Activated T-helper 2 cell treated with anti-CD3 and anti-CD28 coated beads, Interferon-gamma antibody, Interleukin-2, Interleukin-4, amounts not matched to agents 10 μg/mL and 5 μg/mL and 100 μg/mL, durations not matched to agents 14 hours and 24 hours and 36 hours (primary cell): ENCODE measurements at regions of chr6 and their contacts with region 1.

Region 1: DNA sequence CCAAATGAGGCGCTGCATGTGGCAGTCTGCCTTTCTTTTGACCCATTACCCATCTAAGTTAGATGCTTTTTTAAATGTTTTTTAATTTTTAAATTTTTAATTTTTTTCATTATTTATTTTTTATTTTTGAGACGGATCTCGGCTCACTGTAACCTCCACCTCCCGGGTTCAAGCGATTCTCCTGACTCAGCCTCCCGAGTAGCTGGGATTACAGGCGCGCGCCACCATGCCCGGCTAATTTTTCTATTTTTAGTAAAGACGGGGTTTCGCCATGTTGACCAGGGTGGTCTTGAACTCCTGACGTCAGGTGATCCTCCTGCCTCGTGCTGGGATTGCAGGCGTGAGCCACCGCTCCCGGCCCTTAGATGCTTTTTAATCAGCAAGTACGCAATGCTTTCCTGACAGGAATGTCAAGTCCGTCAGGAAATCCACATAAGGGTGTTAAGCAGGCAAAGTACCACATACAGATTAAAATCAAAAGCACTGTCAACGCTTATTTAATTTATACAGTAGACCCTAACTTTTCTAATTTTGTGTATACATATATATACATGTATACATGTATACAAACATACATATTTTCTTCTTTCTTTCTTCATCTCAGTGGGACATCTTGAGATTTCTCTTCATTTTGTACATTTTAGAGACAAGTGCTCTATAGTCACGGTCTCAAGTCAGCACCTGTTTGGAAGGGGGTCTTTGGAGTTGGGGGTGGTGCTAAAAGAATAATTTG is 995 bp upstream of the GSTA4 start:
- DNase-seq: peak; percentile 23
- H3K4me3 Mint-ChIP-seq: peak overlapping the region; percentile 90
- H3K27ac Mint-ChIP-seq: peak overlapping the region; percentile 90
- H3K4me1 Mint-ChIP-seq: peaks cover 30% of the 10 kb centered on the region
- H3K27me3 Mint-ChIP-seq: peaks cover 8% of the 10 kb centered on the region

Region 2: GRCh38 chr6:52419809-52420670 is 576.0 kb before region 1 on chr6 and contains the start of gene EFHC1:
- intact Hi-C with region 1: loop called (anchors 2 kb)
- DNase-seq: peak; percentile 97
- H3K4me3 Mint-ChIP-seq: no peak within 1 kb of the TSS
- H3K27ac Mint-ChIP-seq: no peak within 1 kb of the TSS
- H3K4me1 Mint-ChIP-seq: peaks cover 20% of the 10 kb centered on the region
- H3K27me3 Mint-ChIP-seq: peaks cover 5% of the 10 kb centered on the region
- total RNA-seq, gene EFHC1: 0.67 and 1.6 TPM in 2 replicates

Region 3: GRCh38 chr6:52815167-52816092 is 180.6 kb before region 1 on chr6:
- intact Hi-C with region 1: no loop called
- DNase-seq: peak; percentile 24
- H3K4me3 Mint-ChIP-seq: no peak overlapping the region
- H3K27ac Mint-ChIP-seq: no peak overlapping the region
- H3K4me1 Mint-ChIP-seq: no peaks in the 10 kb centered on the region
- H3K27me3 Mint-ChIP-seq: peaks cover 15% of the 10 kb centered on the region

Region 4: DNA sequence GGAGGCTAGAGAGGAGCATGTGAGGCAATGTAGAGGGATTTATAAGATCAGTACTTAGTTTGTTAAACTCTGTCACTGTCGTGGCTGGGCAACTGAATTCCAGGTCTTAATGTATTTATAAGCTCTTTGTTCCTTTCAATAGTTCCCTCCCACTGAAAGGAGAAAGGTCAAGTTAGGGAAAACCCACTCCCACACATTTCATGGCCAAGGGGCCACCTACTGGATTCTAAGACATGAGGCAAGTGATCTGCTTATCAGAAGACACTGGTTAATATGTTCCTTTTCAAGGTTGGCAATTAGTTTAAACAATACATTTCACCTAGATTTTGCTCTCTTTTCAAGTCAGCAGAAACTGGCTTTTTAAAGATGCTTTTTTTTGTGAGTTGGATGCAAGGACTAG is 150.1 kb before region 1 on chr6:
- intact Hi-C with region 1: no loop called
- DNase-seq: no peak
- H3K4me3 Mint-ChIP-seq: no peak overlapping the region
- H3K27ac Mint-ChIP-seq: no peak overlapping the region
- H3K4me1 Mint-ChIP-seq: peaks cover 4% of the 10 kb centered on the region
- H3K27me3 Mint-ChIP-seq: peaks cover 17% of the 10 kb centered on the region

Region 5: GRCh38 chr6:52881996-52882841 is 113.9 kb before region 1 on chr6:
- intact Hi-C with region 1: loop called (anchors 1 kb)
- DNase-seq: peak; percentile 60
- H3K4me3 Mint-ChIP-seq: peak overlapping the region; percentile 82
- H3K27ac Mint-ChIP-seq: peak overlapping the region; percentile 51
- H3K4me1 Mint-ChIP-seq: peaks cover 22% of the 10 kb centered on the region
- H3K27me3 Mint-ChIP-seq: peaks cover 9% of the 10 kb centered on the region

Region 6: DNA sequence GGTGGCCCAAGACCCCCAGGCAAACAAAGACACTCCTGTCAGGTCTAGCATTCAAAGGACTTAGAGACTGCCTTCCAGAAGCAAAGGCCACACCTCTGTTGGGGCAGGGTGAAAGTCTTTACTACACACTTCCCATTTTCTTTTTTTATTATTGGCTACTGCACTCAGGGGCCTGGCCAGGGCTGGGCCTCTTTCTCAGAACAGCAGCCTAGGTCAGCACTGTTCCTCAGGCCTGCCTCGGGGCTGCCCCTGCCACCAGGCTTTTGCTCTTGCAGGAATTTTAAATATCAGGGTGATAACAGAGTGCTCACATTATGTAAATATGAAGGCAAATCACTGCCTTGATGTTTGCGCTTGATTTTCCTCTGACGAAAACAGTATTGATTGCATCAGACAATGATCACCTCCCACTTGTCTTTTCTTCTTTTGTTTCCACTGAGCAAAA is 19.5 kb before region 1 on chr6:
- intact Hi-C with region 1: loop called (anchors 1 kb)
- DNase-seq: no peak
- H3K4me3 Mint-ChIP-seq: peak overlapping the region; percentile 21
- H3K27ac Mint-ChIP-seq: peak overlapping the region; percentile 91
- H3K4me1 Mint-ChIP-seq: peaks cover 51% of the 10 kb centered on the region
- H3K27me3 Mint-ChIP-seq: no peaks in the 10 kb centered on the region

Region 7: GRCh38 chr6:53026526-53026925 is 30.4 kb after region 1 on chr6:
- intact Hi-C with region 1: loop called (anchors 2 kb)
- DNase-seq: no peak
- H3K4me3 Mint-ChIP-seq: no peak overlapping the region
- H3K27ac Mint-ChIP-seq: peak overlapping the region; percentile 64
- H3K4me1 Mint-ChIP-seq: peaks cover 25% of the 10 kb centered on the region
- H3K27me3 Mint-ChIP-seq: no peaks in the 10 kb centered on the region

Region 8: GRCh38 chr6:53544470-53545308 is 548.6 kb after region 1 on chr6 and contains the start of gene GCLC:
- intact Hi-C with region 1: loop called (anchors 5 kb)
- DNase-seq: peak; percentile 88
- H3K4me3 Mint-ChIP-seq: peak within 1 kb of the TSS; percentile 91
- H3K27ac Mint-ChIP-seq: peak within 1 kb of the TSS; percentile 96
- H3K4me1 Mint-ChIP-seq: peaks cover 53% of the 10 kb centered on the region
- H3K27me3 Mint-ChIP-seq: peaks cover 8% of the 10 kb centered on the region
- total RNA-seq, gene GCLC: 26.9 and 28.0 TPM in 2 replicates